Posterior vena cava (tissue), 2 donors: ENCODE measurements at regions of chr1 and their contacts with region 1.

Region 1: GRCh38 chr1:154975409-154976059 is 1.1 kb downstream of the CKS1B start:
- DNase-seq: peak; percentile 89

Region 2: DNA sequence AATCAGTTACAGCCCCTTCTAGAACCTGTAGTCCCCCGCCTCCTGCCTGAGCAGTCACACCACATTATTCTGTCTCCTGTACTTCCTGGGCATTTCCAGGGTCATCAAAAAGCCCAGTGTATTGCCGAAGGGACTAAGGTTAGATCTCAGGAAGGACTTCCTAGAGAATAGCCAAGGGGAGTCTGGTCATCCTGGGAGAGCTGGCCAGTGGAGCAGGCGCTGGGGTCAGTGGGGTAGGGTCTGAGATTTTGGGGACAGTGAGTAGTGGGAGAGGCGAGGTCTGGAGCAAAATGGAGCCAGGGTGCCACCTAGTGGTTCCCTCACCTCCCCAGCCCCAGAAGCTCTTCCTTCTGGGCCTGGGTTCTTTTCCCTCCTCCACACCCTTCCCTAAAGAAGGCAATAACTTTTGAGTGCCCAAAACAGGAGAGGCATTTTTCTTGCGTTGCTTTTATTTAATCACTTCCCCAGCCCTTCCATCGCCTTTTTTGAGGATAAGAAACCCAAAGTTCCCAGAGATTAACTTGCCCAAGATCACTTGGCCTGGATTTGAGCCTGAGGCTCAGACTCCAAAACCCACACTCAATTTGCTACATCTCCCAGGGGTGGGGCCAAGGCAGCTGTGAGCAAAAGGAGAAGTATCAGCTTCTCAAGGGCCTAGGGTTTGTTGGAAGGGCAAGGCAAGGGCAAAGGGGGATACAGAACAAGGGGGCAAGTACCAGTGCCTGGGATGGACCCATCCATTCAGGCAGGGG is 31.7 kb before region 1 on chr1:
- intact Hi-C with region 1: no loop called
- DNase-seq: no peak

Region 3: GRCh38 chr1:155022927-155023236 is 47.3 kb after region 1 on chr1:
- intact Hi-C with region 1: loop called in 1 of 2 experiments (anchors 2 kb)
- DNase-seq: no peak

Region 4: DNA sequence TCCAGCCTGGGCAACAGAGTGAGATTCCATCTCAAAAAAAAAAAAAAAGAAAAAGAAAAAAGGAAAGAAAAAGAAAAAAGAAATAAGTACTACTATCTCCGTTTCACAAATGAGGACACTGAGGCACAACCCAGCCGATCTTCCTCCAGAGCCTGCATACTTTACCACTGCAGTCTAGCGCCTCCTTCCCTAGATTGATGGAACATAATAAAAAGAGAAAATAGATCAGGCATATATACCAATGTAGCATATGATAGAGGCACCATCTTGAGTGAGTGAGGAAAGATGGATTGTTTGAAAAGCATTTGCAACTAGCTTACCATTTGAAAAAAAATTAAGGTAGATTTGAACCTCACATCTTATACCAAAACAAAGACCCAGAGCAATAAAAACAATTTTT is 170.0 kb after region 1 on chr1:
- intact Hi-C with region 1: no loop called
- DNase-seq: no peak

Region 5: DNA sequence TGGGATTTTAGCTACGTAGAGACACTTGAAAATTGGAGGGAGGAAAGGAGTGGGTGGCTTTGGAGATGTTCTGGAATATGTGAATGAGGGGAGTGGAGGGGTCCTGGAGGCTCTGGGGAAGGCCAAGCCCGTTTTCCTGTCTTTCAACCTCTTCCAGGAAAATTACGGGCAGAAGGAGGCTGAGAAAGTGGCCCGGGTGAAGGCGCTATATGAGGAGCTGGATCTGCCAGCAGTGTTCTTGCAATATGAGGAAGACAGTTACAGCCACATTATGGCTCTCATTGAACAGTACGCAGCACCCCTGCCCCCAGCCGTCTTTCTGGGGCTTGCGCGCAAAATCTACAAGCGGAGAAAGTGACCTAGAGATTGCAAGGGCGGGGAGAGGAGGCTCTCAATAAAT is 344.7 kb after region 1 on chr1:
- intact Hi-C with region 1: no loop called
- DNase-seq: no peak